Naive thymus-derived CD8-positive, alpha-beta T cell (primary cell): ENCODE measurements at regions of chr2 and their contacts with region 1.

Region 1: DNA sequence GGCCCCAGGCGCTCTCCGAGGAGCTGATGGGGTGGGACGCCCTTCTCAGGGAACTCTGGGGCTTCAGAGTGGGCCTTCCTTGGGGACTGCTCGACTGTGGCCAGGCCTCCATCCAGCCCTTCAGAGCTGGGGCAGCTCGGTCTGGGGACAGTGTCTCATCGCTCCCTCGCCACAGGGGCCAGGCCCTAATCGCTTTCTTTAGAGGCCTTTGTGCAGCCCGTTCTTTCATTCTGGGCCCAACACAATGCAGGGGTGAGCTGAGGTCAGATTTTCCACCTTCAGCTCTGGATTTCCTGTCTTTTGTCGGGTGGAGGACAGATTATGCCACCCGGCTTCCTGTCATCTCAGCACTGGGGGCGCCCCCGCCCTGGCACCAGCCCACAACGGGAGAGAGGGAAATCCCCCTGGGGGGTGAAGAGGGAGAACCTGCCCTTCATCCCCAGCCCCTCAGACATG is 25.2 kb downstream of the MYCN start:
- DNase-seq: peak in 7 of 10 donors; percentile 25 to 72 (median 40)
- ATAC-seq: peak; percentile 82 to 89
- H3K4me3 Mint-ChIP-seq: peak overlapping the region; percentile 47 to 89 (median 72)
- H3K27ac Mint-ChIP-seq: peak overlapping the region; percentile 53 to 92 (median 84)
- H3K4me1 Mint-ChIP-seq: peaks cover 27 to 47% (median 40%) of the 10 kb centered on the region in 4 donors
- H3K27me3 Mint-ChIP-seq: no peaks in the 10 kb centered on the region

Region 2: GRCh38 chr2:15943378-15944280 is 22.0 kb before region 1 on chr2:
- POLR2A ChIA-PET with region 1: interaction called, 20 read pairs
- DNase-seq: peak in 2 of 10 donors; percentile 54 to 59
- ATAC-seq: peak; percentile 16 to 29
- H3K4me3 Mint-ChIP-seq: peak overlapping the region; percentile 69 to 86 (median 79)
- H3K27ac Mint-ChIP-seq: peak overlapping the region in 1 of 10 donors; percentile 37
- H3K4me1 Mint-ChIP-seq: peaks cover 20 to 41% (median 32%) of the 10 kb centered on the region in 4 donors
- H3K27me3 Mint-ChIP-seq: peaks cover 9 to 34% (median 26%) of the 10 kb centered on the region in 5 donors